CD8-positive, alpha-beta T cell (primary cell): ENCODE measurements at regions of chr14 and their contacts with region 1.

Region 1: DNA sequence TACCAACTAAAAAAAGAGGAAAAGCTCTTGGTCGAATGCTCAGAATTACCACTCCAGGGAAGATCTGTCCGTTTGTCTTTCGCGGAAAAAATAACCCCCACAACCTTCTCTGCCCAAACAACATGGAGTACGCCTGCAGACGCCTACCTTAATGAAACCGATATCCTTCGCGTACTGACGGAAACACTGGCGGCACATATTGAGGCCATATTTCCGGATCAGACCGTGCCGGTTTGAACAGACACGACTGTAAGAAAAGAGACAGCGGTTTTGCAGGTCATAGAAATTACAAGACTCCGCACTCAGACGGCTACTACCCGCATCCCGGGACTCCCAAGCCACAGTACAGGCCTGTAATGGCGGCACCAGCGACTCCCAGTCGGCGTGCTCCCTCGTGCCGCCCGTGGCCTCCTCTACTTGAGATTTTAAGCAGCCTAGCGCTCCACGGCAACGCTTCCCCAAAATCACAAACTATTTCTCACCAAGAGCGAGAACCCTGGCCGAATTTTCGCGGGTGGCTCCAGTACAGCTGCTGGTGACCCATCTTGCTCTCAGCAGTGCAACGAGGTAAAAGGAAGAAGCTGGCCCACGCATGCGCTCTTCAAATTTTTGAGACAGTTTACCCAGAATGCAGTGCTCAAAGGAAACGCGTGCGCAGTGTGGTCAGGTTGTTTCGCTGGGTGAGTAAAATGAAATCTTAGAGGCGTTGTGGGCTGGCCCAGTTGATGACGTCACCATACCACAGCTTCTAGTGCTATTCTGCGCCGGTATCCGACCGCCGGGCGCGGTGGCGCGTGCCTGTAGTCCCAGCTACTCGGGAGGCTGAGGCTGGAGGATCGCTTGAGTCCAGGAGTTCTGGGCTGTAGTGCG is at the start of gene RPS29:
- DNase-seq: peak; percentile 97 to 100 (median 98)
- ATAC-seq: peak; percentile 82
- H3K4me3 ChIP-seq: peak within 1 kb of the TSS; percentile 81 to 98
- H3K4me3 Mint-ChIP-seq: peak within 1 kb of the TSS; percentile 91
- H3K27ac ChIP-seq: peak within 1 kb of the TSS; percentile 97 to 98
- H3K27ac Mint-ChIP-seq: peak within 1 kb of the TSS; percentile 98
- H3K4me1 ChIP-seq: peaks cover 33% of the 10 kb centered on the region
- H3K4me1 Mint-ChIP-seq: peaks cover 48% of the 10 kb centered on the region
- H3K27me3 ChIP-seq: no peaks in the 10 kb centered on the region
- H3K27me3 Mint-ChIP-seq: no peaks in the 10 kb centered on the region
- CTCF ChIP-seq: no peak
- total RNA-seq, gene RPS29: 3,843 to 3,876 TPM

Region 2: DNA sequence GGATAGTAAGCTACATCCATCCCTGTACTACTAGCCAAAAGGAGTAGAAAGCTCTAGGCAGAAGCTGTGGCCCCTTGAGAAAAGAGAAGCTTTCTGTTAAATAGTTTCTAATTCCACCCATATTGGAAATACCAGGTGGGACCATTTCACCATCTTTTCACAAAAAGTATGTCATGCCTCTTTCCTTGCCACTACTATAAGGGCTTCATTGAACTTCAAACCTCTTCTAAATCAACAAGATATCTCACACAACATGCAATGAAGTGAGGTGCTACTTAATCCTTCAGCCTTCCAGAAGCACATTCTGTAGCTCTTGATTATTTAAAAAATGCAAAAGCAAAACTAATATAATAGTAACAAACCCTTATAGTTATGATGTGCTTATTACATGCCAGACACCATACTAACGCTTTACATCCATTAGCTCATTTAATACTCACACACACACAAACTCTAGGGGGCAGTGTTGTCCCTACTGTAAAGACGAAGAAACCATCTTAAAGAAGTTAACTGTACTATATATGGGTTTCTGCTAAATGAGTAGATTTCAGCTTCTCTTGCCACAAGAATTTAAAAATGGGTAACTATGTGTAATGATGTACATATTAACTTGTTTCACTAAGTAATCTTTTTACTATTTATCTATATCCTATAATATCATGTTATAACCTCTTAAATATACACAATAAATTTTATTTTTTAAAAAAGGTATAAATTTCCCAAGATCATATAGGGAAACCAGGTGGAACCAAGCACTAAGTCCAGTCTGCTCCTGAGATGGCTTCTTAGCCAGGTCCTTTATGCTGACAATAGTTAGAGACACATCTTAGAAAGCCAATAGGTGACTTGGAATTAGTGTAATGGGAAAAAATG is 124.3 kb before region 1 on chr14:
- CTCF ChIA-PET with region 1: no interaction called
- POLR2A ChIA-PET with region 1: interaction called, 6 read pairs
- intact Hi-C with region 1: loop called (anchors 1 to 10 kb)
- DNase-seq: peak in 8 of 9 experiments; percentile 39 to 85 (median 54)
- ATAC-seq: peak; percentile 87
- H3K4me3 ChIP-seq: no peak overlapping the region
- H3K4me3 Mint-ChIP-seq: no peak overlapping the region
- H3K27ac ChIP-seq: no peak overlapping the region
- H3K27ac Mint-ChIP-seq: no peak overlapping the region
- H3K4me1 ChIP-seq: no peaks in the 10 kb centered on the region
- H3K4me1 Mint-ChIP-seq: no peaks in the 10 kb centered on the region
- H3K27me3 ChIP-seq: no peaks in the 10 kb centered on the region
- H3K27me3 Mint-ChIP-seq: peaks cover 3% of the 10 kb centered on the region
- CTCF ChIP-seq: peak; percentile 78

Region 3: DNA sequence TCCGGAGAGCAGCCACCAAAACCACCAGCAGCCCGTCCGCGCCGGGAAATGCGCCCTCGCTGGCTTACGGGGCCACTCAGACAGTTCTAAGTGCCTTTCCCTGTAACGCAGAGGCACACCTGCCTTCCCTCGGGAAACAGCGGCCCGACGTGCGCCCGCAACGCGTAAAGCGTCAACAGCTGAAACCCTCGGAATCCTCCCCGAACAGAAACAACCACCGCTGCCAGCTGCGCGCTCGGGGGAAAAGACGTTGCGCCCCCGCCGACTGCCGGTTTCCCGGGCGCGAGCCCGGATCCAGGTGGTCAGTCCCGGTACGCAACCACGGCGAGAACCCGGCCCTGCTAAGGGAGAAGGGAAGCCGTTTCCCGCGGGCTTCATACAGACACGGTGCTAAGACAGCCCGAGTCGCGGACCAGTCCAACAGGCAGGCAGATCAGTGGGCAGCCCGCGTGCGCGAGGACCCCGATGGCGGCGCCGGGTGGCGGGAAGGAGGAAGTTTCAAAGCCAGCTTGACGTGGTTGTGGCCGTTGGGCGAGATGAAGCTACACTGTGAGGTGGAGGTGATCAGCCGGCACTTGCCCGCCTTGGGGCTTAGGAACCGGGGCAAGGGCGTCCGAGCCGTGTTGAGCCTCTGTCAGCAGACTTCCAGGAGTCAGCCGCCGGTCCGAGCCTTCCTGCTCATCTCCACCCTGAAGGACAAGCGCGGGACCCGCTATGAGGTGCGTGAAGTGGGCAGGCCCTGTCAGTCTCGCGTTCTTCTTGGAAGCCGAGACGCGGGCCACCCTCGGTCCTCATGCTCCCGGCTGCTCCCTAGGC is 12.7 kb after region 1 on chr14 and contains the start of gene LRR1:
- CTCF ChIA-PET with region 1: interaction called, 10 read pairs
- POLR2A ChIA-PET with region 1: interaction called, 57 read pairs
- intact Hi-C with region 1: loop called (anchors 1 kb)
- DNase-seq: peak; percentile 79 to 91 (median 84)
- ATAC-seq: peak; percentile 86
- H3K4me3 ChIP-seq: peak within 1 kb of the TSS; percentile 84 to 99
- H3K4me3 Mint-ChIP-seq: peak within 1 kb of the TSS; percentile 99
- H3K27ac ChIP-seq: peak within 1 kb of the TSS; percentile 92 to 95
- H3K27ac Mint-ChIP-seq: peak within 1 kb of the TSS; percentile 100
- H3K4me1 ChIP-seq: peaks cover 12% of the 10 kb centered on the region
- H3K4me1 Mint-ChIP-seq: peaks cover 31% of the 10 kb centered on the region
- H3K27me3 ChIP-seq: no peaks in the 10 kb centered on the region
- H3K27me3 Mint-ChIP-seq: no peaks in the 10 kb centered on the region
- CTCF ChIP-seq: no peak
- total RNA-seq, gene LRR1: 6.2 to 7.3 TPM

Region 4: DNA sequence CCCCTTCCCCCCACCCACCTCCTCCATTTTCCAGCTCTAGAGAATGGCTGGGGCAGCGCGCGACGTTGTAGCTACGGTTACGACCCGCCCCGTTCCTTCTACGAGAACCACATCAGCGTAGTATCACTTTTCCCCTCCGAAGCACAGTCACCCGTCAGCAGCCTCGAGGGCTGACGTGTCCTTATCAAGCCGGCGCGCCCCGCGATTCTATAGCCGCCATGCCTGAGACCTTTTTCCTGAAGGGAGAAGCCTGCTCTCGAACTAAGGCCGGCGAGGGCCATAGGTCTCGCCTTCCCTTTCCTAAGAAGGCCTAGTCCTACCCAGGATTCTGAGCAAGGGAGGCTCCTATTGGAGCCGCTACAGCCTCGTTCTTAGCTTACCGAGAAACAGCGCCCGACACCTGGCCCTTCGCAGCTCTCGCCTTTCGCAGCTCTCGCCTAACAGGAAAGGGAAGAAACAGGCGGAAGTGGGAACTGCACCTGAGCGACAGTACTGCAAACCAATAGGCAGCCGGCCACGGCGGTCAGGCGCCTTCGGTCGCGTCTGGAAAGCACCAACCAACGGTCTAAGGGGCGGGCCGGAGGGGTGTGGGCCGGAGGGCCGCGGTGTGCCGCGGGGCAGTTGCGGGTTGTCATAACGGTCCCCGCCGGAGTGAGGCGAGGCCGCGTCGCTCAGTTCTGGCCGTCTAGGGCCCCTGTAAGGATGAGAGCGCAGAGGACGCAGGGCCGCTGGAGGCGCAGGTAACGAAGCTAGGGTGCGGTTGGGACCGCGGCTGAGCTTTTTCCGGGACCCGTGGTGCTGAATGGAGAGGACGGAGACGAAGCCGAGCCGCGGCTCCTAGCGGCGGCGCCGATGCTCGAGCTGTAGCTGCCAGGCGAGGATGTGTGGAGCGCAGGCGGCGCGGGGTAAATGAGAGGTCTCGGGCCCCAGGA is 34.4 kb after region 1 on chr14 and contains the starts of genes MGAT2 and RPL36AL:
- CTCF ChIA-PET with region 1: interaction called, 22 read pairs
- POLR2A ChIA-PET with region 1: interaction called, 73 read pairs
- intact Hi-C with region 1: loop called (anchors 1 kb)
- DNase-seq: peak; percentile 85 to 97 (median 93)
- ATAC-seq: peak; percentile 79
- H3K4me3 ChIP-seq: peak within 1 kb of the TSS; percentile 94 to 95
- H3K4me3 Mint-ChIP-seq: peak within 1 kb of the TSS; percentile 97
- H3K27ac ChIP-seq: peak within 1 kb of the TSS; percentile 98 to 99
- H3K27ac Mint-ChIP-seq: peak within 1 kb of the TSS; percentile 100
- H3K4me1 ChIP-seq: peaks cover 40% of the 10 kb centered on the region
- H3K4me1 Mint-ChIP-seq: peaks cover 62% of the 10 kb centered on the region
- H3K27me3 ChIP-seq: no peaks in the 10 kb centered on the region
- H3K27me3 Mint-ChIP-seq: no peaks in the 10 kb centered on the region
- CTCF ChIP-seq: no peak
- total RNA-seq, gene MGAT2: 22.6 to 24.0 TPM
- total RNA-seq, gene RPL36AL: 302 to 318 TPM

Region 5: DNA sequence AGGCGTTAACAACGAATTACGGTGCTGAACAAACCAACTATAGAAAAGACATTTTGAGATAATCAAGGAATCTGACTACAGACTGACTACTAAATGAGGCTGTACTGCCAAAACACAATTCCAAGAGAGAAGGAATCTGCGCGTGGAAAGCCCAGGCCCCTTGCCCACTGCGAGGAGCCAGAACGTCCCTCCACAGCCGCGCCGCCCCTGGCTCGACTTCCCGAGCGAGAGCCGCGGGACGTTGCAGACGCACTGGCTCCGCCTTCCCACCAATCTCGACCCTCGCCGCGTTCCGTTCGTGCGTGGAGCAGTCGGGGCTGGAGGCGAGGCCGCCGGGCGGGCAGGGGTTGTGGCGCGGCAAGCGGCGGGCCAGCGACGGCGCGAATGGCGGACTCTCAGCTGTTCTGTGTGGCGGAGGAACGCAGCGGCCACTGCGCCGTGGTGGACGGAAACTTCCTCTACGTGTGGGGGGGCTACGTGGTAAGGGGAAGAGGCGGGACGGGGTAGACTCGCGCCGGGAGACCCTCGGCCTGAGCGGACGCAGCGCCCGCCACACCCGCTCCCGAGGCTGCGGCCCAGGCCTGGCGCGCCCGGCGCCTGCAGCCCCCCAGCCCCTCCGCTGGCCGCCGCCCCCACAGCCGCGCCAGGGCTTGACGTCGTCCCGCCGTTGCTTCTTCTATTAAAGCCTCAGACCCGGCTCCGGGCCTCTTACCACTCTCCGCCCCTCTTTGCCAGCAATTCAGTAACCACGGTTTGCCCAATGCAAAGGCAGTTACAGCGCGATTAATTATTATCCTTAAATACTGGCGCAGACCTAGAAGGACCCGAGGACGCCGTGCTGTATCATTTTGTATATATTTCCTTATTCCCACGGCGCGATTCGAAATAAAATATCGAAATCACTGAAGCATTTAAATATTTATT is 107.0 kb after region 1 on chr14 and contains the start of gene KLHDC1:
- CTCF ChIA-PET with region 1: interaction called, 3 read pairs
- POLR2A ChIA-PET with region 1: interaction called, 3 read pairs
- intact Hi-C with region 1: loop called (anchors 2 to 5 kb)
- DNase-seq: peak; percentile 56 to 90 (median 81)
- ATAC-seq: peak; percentile 84
- H3K4me3 ChIP-seq: peak within 1 kb of the TSS; percentile 49 to 63
- H3K4me3 Mint-ChIP-seq: peak within 1 kb of the TSS; percentile 78
- H3K27ac ChIP-seq: peak within 1 kb of the TSS; percentile 59 to 82
- H3K27ac Mint-ChIP-seq: peak within 1 kb of the TSS; percentile 90
- H3K4me1 ChIP-seq: peaks cover 15% of the 10 kb centered on the region
- H3K4me1 Mint-ChIP-seq: peaks cover 34% of the 10 kb centered on the region
- H3K27me3 ChIP-seq: no peaks in the 10 kb centered on the region
- H3K27me3 Mint-ChIP-seq: no peaks in the 10 kb centered on the region
- CTCF ChIP-seq: no peak
- total RNA-seq, gene KLHDC1: 8.5 to 11.0 TPM

Region 6: DNA sequence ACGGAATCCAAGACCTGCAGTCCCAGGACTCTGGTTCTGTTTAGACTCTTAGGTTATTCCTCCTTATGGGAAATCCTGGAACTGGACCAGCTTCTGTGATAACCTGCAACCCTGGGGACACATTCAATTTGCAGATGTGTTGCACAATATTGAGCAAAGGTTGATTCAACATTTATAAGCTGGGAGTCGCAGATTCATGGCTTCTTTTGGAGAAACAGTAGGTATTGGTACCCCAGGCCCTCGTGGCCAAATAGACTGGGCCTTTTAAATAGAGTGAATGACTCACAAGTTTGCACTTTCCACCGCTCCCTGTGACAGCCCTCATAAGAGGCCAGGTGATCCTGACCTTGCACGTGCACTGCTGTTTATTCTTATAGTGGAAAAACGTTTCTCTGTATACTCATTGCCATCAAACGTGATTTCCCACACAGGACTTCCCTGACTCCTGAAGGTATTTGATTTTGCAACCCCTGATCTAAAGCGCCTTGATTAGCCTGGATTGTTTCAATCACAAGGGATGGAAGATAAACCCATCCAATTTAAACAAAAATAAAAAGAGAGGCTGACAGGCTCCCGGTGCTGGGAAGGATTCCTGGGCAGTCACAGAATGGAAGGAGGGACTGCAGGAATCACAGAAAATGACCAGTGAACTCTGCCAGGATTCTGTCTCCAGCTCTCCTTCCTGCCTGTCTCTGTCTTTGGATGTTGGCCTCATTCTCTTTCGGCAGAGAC is 432.3 kb after region 1 on chr14:
- CTCF ChIA-PET with region 1: no interaction called
- POLR2A ChIA-PET with region 1: no interaction called
- intact Hi-C with region 1: no loop called
- DNase-seq: no peak
- ATAC-seq: no peak
- H3K4me3 ChIP-seq: no peak overlapping the region
- H3K4me3 Mint-ChIP-seq: no peak overlapping the region
- H3K27ac ChIP-seq: no peak overlapping the region
- H3K27ac Mint-ChIP-seq: no peak overlapping the region
- H3K4me1 ChIP-seq: peaks cover 11% of the 10 kb centered on the region
- H3K4me1 Mint-ChIP-seq: peaks cover 22% of the 10 kb centered on the region
- H3K27me3 ChIP-seq: no peaks in the 10 kb centered on the region
- H3K27me3 Mint-ChIP-seq: no peaks in the 10 kb centered on the region
- CTCF ChIP-seq: no peak